PC-9 (cell line): ENCODE measurements at regions of chr1 and their contacts with region 1.

Region 1: GRCh38 chr1:117534995-117535467 is 70.8 kb upstream of the TENT5C start:
- DNase-seq: peak; percentile 33 to 60
- H3K4me3 ChIP-seq: no peak overlapping the region
- H3K27ac ChIP-seq: no peak overlapping the region
- H3K4me1 ChIP-seq: peaks cover 17% of the 10 kb centered on the region
- H3K27me3 ChIP-seq: no peaks in the 10 kb centered on the region
- CTCF ChIP-seq: peak; percentile 90

Region 2: GRCh38 chr1:117674521-117675397 is 139.7 kb after region 1 on chr1:
- CTCF ChIA-PET with region 1: no interaction called
- POLR2A ChIA-PET with region 1: interaction called, 3 read pairs
- intact Hi-C with region 1: loop called (anchors 1 kb)
- DNase-seq: peak in 1 of 2 experiments; percentile 55
- H3K4me3 ChIP-seq: no peak overlapping the region
- H3K27ac ChIP-seq: no peak overlapping the region
- H3K4me1 ChIP-seq: peaks cover 7% of the 10 kb centered on the region
- H3K27me3 ChIP-seq: no peaks in the 10 kb centered on the region
- CTCF ChIP-seq: peak; percentile 51; the same call in 1 of the 2 replicates